OCI-LY7 (cell line): ENCODE measurements at regions of chr20 and their contacts with region 1.

Region 1: GRCh38 chr20:14055127-14055742 is 59.9 kb downstream of the MACROD2 start:
- DNase-seq: peak; percentile 59
- H3K4me3 ChIP-seq: no peak overlapping the region
- H3K27ac ChIP-seq: no peak overlapping the region
- H3K4me1 ChIP-seq: no peaks in the 10 kb centered on the region
- CTCF ChIP-seq: peak; percentile 89

Region 2: GRCh38 chr20:13819885-13820645 is 235.2 kb before region 1 on chr20:
- CTCF ChIA-PET with region 1: no interaction called
- POLR2A ChIA-PET with region 1: no interaction called
- intact Hi-C with region 1: loop called (anchors 2 kb)
- DNase-seq: peak; percentile 61
- H3K4me3 ChIP-seq: no peak overlapping the region
- H3K27ac ChIP-seq: no peak overlapping the region
- H3K4me1 ChIP-seq: no peaks in the 10 kb centered on the region
- CTCF ChIP-seq: peak; percentile 80